Aorta (tissue), 5 donors: ENCODE measurements at regions of chr17 and their contacts with region 1.

Region 1: DNA sequence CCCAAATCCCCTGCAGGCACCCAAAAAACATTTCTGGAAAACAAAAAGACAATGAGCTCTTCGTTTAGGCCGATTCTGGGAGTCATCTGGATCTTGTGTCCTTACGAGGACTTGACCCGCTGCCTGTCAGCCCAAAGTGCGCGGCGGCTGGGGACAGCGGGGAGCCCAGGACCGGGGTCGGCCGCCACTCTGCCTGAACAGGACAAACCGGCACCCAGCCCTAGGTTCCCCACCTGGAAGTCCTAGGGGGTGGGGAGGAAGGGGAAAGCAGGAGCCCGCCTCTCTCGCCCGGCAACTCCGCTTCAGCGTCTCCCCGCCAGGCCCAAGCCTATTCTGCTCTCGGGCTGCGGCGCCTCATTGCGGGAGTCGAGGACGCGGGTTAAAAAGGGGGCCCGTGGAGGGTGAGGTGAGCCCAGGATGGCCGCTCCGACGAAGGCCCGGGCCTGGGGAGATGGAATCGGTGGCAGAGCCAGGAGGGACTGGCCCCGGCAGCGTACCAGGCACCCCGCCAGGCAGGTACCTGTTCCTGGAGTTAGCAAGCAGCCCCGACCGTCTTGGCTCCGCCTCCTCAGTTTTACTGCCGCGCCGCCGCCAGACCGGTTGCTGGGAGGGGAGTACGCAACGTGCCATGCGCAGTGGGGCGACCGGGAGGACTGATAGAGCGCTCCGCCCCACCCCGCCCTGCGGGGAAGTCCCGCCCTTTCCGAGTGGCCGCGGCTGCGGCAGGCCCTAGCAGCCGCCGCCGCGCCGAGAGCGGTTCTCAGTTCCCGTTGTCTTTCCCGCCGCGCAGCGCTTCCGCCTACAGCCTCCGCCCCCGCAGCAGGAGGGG is at the start of gene STRADA:
- DNase-seq: peak; percentile 99 to 100
- ATAC-seq: peak; percentile 100
- H3K4me3 ChIP-seq: peak within 1 kb of the TSS; percentile 56 to 60
- H3K27ac ChIP-seq: peak within 1 kb of the TSS; percentile 20 to 94
- H3K4me1 ChIP-seq: no peaks in the 10 kb centered on the region
- H3K27me3 ChIP-seq: no peaks in the 10 kb centered on the region
- total RNA-seq, gene STRADA: 39.0 to 63.8 TPM

Region 2: DNA sequence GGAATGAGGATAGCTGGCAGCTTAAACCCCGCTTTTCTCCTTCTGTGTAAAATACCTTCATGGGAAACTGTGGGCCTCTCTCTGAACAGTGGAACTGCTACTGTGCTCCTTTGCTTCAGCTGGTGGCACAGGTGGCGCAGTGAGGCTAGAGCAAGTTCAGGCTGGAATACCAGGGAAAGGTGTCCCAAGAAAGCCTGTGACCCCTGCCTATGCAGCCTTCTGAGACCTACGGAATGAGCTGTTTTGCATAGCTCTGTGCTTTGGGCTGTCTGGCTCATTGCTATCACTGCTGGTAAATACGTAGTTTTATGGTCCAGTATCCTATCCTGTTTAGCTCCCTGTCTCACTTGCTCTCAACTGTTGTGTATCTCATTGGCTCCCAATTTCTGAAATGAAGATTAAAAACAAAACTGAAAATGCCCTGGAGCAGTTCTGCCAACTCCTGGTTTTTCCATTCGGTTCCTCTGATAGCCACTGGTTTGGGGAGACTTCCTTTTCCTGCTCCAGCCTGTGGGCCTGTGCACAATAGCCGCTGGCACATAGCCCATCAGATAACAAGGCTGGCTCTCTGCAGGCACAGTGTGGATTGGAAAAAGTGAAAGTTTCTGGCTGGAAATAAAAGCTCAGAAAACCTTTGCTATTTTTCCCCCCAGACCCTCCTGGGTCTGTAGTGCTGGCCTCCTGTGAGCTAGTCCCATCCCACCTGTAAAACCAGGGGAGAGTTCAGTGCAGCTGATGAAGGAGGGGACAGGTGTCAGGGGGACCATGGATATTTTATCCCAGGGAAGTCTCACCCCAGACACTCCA is 65.6 kb before region 1 on chr17:
- intact Hi-C with region 1: loop called in 1 of 2 experiments (anchors 5 kb)
- DNase-seq: peak; percentile 88 to 90
- ATAC-seq: peak; percentile 92
- H3K4me3 ChIP-seq: no peak overlapping the region
- H3K27ac ChIP-seq: peak overlapping the region; percentile 84 to 91
- H3K4me1 ChIP-seq: no peaks in the 10 kb centered on the region
- H3K27me3 ChIP-seq: no peaks in the 10 kb centered on the region

Region 3: GRCh38 chr17:63699638-63700527 is 41.6 kb before region 1 on chr17 and contains the start of gene LIMD2:
- intact Hi-C with region 1: no loop called
- DNase-seq: peak; percentile 75 to 91
- ATAC-seq: no peak
- H3K4me3 ChIP-seq: peak within 1 kb of the TSS; percentile 36 to 55
- H3K27ac ChIP-seq: peak within 1 kb of the TSS; percentile 7 to 48
- H3K4me1 ChIP-seq: no peaks in the 10 kb centered on the region
- H3K27me3 ChIP-seq: no peaks in the 10 kb centered on the region
- total RNA-seq, gene LIMD2: 15.6 to 23.1 TPM